SK-N-SH (cell line): ENCODE measurements at regions of chr3 and their contacts with region 1.

Region 1: GRCh38 chr3:122392868-122393844 is 9.2 kb downstream of the FAM162A start:
- DNase-seq: peak; percentile 33
- H3K4me3 ChIP-seq: no peak overlapping the region
- H3K27ac ChIP-seq: no peak overlapping the region; a peak in 1 of 4 replicates
- H3K4me1 ChIP-seq: peaks cover 2 to 19% of the 10 kb centered on the region in 2 experiments; a peak in 3 of 4 replicates
- H3K27me3 ChIP-seq: no peaks in the 10 kb centered on the region
- CTCF ChIP-seq: peak; percentile 85
- EP300 ChIP-seq: no peak
- RAD21 ChIP-seq: peak; percentile 83

Region 2: DNA sequence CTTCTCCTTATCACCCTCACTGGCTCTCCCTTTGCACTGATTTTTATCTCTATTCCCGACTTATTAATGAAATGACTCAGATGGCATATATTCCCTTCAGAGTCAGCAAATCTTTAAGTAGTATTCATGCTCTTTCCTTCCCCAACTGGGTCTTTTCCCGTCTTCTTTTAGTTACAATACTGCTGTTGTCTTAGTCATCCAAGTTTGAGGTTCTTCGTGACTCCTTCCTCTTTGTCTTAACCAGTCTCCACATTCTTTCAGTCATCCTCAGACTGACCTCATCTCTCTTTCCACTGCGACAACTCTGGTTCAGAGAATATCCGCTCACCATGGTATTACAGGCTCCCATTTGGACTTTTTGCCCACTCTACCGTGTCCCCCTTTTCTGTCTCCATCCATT is 10.3 kb after region 1 on chr3:
- CTCF ChIA-PET with region 1: interaction called, 13 read pairs
- POLR2A ChIA-PET with region 1: no interaction called
- DNase-seq: no peak
- H3K4me3 ChIP-seq: no peak overlapping the region
- H3K27ac ChIP-seq: peak overlapping the region in 1 of 2 experiments; percentile 26; a peak in 2 of 4 replicates
- H3K4me1 ChIP-seq: no peaks in the 10 kb centered on the region
- H3K27me3 ChIP-seq: no peaks in the 10 kb centered on the region
- CTCF ChIP-seq: no peak
- EP300 ChIP-seq: no peak
- RAD21 ChIP-seq: no peak

Region 3: GRCh38 chr3:122824465-122825381 is 431.6 kb after region 1 on chr3:
- CTCF ChIA-PET with region 1: no interaction called
- POLR2A ChIA-PET with region 1: no interaction called
- DNase-seq: no peak
- H3K4me3 ChIP-seq: no peak overlapping the region
- H3K27ac ChIP-seq: no peak overlapping the region
- H3K4me1 ChIP-seq: no peaks in the 10 kb centered on the region
- H3K27me3 ChIP-seq: no peaks in the 10 kb centered on the region
- CTCF ChIP-seq: no peak
- EP300 ChIP-seq: no peak
- RAD21 ChIP-seq: no peak